Right ventricle myocardium superior (tissue), 1 donor: ENCODE measurements at regions of chr2 and their contacts with region 1.

Region 1: GRCh38 chr2:217289877-217290279 is 430.0 kb upstream of the TNP1 start:
- DNase-seq: no peak
- ATAC-seq: peak; percentile 86

Region 2: DNA sequence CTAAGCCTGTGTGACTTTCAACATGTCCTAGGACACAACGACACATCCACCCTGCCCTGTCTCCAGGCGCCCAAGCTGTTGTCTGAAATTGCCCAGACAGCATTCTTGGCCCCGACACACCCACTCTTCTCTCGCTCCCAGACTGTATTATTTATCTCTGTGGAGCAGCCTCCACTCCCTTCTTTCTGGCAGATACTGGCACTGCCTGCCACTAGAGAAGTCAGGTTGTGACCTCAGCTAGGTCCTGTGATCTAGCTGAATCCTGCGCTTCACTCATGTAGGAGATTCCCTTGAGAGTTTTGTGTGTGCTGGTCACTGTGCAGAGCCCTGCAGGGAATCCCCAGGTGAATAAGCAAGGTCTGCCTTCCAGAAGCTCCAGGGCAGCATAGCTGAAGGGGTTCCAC is 352.9 kb before region 1 on chr2:
- intact Hi-C with region 1: no loop called
- DNase-seq: peak; percentile 55
- ATAC-seq: peak; percentile 91

Region 3: DNA sequence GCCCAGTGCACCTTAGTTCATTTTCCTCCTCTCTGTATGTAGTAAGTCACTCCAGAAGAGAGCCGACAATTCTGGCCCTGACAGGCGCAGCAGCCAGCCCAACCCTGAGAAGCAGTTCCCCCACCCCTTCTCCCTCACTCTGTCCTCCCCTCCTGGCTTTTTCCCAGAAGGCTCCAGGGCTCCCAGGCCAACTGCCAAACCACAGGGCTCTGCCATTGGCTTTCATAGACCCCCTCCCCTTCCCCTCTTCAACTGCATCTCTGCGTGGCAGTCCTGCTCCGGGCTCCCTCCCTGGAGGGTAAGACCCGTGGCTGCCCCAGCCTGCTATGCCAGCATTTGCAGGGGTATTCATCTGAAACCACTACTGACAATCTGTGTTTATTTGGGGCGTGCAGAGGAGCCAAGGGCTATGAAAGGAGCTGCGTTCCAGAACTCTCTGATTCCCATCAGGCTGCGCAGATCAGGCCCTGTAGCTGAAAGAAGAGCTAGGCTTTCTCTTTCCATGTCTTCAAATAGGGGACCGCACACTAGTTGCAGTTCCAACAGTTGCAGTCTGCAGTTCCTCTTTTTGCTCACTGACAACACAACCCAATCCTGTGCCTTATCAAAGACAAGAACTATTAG is 41.5 kb before region 1 on chr2:
- intact Hi-C with region 1: no loop called
- DNase-seq: peak; percentile 83
- ATAC-seq: peak; percentile 86

Region 4: DNA sequence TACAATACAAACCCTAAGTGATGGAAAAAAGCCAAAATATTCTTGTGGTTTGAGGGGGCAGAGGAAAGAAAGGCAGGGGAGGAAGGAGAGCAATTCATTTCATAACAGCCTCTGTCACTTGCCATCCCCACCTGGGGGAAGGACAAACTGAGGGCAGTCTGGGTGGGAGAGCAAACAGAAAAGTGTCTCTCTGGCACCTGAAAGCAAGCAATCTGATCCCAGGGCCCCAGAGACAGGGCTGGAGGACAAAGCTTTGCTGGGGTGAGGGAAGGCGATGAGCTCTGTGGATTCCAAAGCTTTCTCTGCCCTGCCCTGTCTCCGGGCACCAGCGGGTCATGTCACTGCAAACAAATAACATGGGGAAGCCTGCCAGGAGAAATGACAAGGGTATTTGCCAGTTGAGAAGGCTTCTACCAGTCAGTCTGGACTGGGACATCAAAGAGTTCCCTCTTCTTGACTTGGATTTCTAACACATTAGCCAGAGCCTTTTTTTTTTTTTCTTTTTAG is 98.1 kb after region 1 on chr2:
- intact Hi-C with region 1: loop called (anchors 10 kb)
- DNase-seq: no peak
- ATAC-seq: peak; percentile 74